Activated B cell treated with CpG ODN at 0.5 μM for 24 hours (primary cell): ENCODE measurements at regions of chr12 and their contacts with region 1.

Region 1: DNA sequence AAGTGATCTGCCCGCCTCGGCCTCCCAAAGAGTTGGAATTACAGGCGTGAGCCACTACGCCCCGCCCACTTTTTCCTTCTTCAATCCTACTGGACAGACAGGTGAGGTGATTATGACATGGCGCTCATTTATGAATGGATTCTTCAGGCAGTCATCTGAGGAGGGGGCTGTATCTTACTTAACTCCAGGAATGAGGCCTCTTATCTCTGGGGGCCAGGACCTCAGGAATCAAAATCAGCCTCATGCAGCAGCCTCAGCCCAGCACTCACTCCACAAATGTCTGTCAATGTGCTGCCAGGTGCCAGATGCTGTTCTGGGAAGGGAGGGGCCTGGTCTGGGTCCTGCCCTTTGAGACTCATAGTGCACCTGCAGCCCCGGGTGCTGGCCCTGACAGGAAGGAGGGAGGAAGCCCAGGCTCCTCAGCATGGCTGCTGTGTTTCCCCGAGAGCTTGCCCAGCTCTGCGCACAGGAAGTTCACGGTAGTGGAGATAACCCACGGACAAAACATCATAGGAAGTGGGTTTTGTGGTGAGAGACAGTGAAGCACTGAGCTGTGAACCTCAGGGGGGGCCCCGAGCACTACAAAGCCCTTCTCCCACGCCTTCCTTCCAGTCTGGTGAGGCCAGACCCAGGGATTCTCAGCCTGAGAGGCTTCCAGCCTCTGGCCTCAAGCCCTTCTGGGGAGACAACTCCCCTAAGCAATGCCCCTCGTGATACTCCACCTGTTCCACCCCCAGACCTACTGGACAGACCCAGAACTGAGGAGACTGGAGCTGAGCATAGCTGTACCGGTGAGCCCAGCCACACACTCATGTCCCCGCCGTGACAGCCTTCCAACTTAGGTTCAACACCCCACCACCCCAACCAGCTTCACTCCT is 22.3 kb downstream of the GALNT6 start:
- DNase-seq: peak; percentile 81
- ATAC-seq: peak; percentile 95
- H3K4me3 Mint-ChIP-seq: peak overlapping the region; percentile 80
- H3K27ac Mint-ChIP-seq: peak overlapping the region; percentile 90
- H3K4me1 Mint-ChIP-seq: peaks cover 65% of the 10 kb centered on the region
- H3K27me3 Mint-ChIP-seq: no peaks in the 10 kb centered on the region
- CTCF ChIP-seq: no peak

Region 2: DNA sequence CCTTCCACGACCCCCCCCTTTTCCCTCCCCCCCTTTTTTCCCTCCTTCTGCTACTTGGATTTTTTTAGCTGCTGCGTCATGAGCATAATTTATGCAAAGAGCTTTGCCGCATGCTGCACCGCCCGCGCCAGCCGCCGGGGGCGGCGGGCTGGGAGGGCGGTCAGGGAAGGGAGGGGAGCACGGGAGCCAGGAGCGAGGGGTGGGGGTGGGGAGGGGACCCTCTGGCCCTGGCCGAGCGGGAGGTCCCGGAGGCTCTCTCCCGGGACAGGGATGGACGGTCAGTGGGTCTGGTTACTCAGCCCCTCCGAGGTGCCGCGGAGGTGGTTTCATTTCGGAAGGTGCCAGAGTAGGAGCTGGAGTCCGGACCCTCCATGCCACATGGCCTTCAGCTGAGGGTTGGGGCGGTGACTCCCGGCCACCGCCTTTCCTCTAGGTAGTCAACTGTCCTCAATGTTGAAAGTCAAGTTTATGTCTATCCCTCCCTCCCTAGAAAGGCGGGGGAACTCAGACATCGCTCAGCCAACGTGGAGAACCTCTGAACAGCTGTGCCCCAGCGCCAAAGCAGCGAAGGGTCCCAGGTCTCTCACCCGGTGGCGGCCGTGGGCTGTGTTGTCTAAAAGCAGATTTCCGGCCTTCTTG is 150.8 kb before region 1 on chr12 and contains the start of gene POU6F1:
- CTCF ChIA-PET with region 1: no interaction called
- POLR2A ChIA-PET with region 1: interaction called, 26 read pairs
- intact Hi-C with region 1: loop called (anchors 1 kb)
- DNase-seq: peak; percentile 68
- ATAC-seq: peak; percentile 79
- H3K4me3 Mint-ChIP-seq: peak within 1 kb of the TSS; percentile 91
- H3K27ac Mint-ChIP-seq: peak within 1 kb of the TSS; percentile 95
- H3K4me1 Mint-ChIP-seq: peaks cover 17% of the 10 kb centered on the region
- H3K27me3 Mint-ChIP-seq: no peaks in the 10 kb centered on the region
- CTCF ChIP-seq: no peak
- total RNA-seq, gene POU6F1: 20.3 and 26.2 TPM in 2 replicates

Region 3: GRCh38 chr12:51326762-51327439 is 42.0 kb before region 1 on chr12:
- CTCF ChIA-PET with region 1: interaction called, 3 read pairs
- POLR2A ChIA-PET with region 1: interaction called, 8 read pairs
- intact Hi-C with region 1: loop called (anchors 1 kb)
- DNase-seq: no peak
- ATAC-seq: peak; percentile 41
- H3K4me3 Mint-ChIP-seq: peak overlapping the region; percentile 62
- H3K27ac Mint-ChIP-seq: peak overlapping the region; percentile 72
- H3K4me1 Mint-ChIP-seq: peaks cover 81% of the 10 kb centered on the region
- H3K27me3 Mint-ChIP-seq: no peaks in the 10 kb centered on the region
- CTCF ChIP-seq: no peak

Region 4: DNA sequence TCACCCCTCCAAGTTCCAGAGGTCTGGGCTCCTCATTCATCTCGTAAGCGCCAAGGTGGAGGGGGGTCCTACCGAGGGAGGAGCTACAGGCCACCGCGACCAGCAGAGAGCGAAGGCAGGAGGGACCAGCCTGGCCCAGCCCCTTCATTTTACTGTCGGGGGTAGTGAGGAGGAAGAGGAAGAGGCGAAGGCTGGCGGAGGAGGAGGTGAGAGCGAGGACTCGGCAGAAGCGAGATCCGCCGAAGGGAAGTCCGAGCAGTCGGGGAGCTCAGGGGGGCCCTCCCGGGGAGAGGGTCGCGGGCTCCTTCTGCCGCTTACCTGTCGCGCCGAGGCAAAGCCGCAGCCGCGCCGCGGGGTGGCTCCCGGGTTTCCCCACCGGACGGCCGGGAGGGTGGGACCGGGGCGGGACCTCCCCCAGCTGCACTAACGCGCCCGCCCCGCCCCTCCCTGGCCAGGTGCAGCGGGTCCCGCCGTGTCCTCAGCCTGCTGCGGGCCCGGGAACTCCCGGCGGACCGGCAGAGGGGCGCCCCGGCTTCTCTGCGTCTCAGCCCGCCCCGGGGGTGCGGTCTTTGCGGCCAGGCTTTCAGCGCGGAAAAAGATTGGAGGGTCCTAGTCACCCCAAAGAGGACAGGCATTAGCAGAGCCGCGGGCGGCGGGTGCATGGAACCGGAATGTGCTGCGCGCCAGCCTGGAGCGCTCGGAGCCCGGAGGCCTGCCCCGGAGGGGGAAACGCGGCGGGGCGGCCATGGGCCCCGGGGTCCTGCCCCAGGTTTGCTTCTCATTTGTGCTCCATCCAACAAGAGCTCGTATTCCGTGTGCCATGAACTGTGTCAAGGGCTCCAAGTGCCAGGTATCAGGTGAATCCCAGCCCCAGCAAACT is 22.6 kb after region 1 on chr12 and contains the start of gene GALNT6:
- CTCF ChIA-PET with region 1: interaction called, 3 read pairs
- POLR2A ChIA-PET with region 1: interaction called, 76 read pairs
- intact Hi-C with region 1: loop called (anchors 1 kb)
- DNase-seq: peak; percentile 80
- ATAC-seq: peak; percentile 75
- H3K4me3 Mint-ChIP-seq: peak within 1 kb of the TSS; percentile 94
- H3K27ac Mint-ChIP-seq: peak within 1 kb of the TSS; percentile 85
- H3K4me1 Mint-ChIP-seq: peaks cover 79% of the 10 kb centered on the region
- H3K27me3 Mint-ChIP-seq: no peaks in the 10 kb centered on the region
- CTCF ChIP-seq: no peak
- total RNA-seq, gene GALNT6: 23.8 and 24.4 TPM in 2 replicates

Region 5: GRCh38 chr12:51590347-51591019 is 221.6 kb after region 1 on chr12:
- CTCF ChIA-PET with region 1: no interaction called
- POLR2A ChIA-PET with region 1: no interaction called
- intact Hi-C with region 1: loop called (anchors 1 kb)
- DNase-seq: peak; percentile 75
- ATAC-seq: peak; percentile 88
- H3K4me3 Mint-ChIP-seq: peak overlapping the region; percentile 88
- H3K27ac Mint-ChIP-seq: peak overlapping the region; percentile 56
- H3K4me1 Mint-ChIP-seq: peaks cover 18% of the 10 kb centered on the region
- H3K27me3 Mint-ChIP-seq: peaks cover 32% of the 10 kb centered on the region
- CTCF ChIP-seq: no peak